ENCODE measurements at regions of chr10 and their contacts with region 1.

Region 1: GRCh38 chr10:122435212-122435827 is 19.1 kb upstream of the ARMS2 start:
- DNase-seq: no peak
- H3K4me3 ChIP-seq: no peak overlapping the region
- H3K27ac ChIP-seq: no peak overlapping the region
- H3K4me1 ChIP-seq: no peaks in the 10 kb centered on the region
- H3K27me3 ChIP-seq: no peaks in the 10 kb centered on the region
- CTCF ChIP-seq: peak; percentile 61 to 70 (median 70)
- EP300 ChIP-seq: no peak
- POLR2A ChIP-seq: no peak

Region 2: GRCh38 chr10:121956111-121957061 is 478.9 kb before region 1 on chr10:
- intact Hi-C with region 1: no loop called
- DNase-seq: no peak
- H3K4me3 ChIP-seq: no peak overlapping the region
- H3K27ac ChIP-seq: no peak overlapping the region
- H3K4me1 ChIP-seq: no peaks in the 10 kb centered on the region
- H3K27me3 ChIP-seq: no peaks in the 10 kb centered on the region
- CTCF ChIP-seq: no peak
- EP300 ChIP-seq: no peak
- POLR2A ChIP-seq: no peak

Region 3: DNA sequence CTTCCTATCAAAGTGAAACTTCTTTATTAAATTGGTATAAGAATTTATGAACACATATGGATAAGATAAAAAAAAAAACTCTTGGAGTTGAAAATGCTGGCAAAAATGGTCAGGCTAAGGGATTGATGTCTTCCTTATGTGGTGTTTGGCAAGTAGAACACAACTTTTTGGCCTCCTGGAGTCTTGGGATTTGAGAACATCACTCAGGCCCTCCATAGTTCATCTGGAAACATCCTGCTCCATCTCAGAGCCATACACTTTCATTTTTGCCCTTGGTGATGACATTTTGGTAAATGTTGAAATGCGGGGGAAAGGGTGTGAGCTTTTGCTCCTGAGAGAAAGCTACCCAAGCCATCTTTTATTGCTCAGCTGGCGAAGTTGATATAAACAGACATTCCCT is 191.8 kb before region 1 on chr10:
- intact Hi-C with region 1: no loop called
- DNase-seq: no peak
- H3K4me3 ChIP-seq: no peak overlapping the region
- H3K27ac ChIP-seq: peak overlapping the region in 2 of 4 donors; percentile 12 to 70
- H3K4me1 ChIP-seq: peaks cover 1 to 25% (median 14%) of the 10 kb centered on the region in 4 donors
- H3K27me3 ChIP-seq: no peaks in the 10 kb centered on the region
- CTCF ChIP-seq: no peak
- EP300 ChIP-seq: no peak
- POLR2A ChIP-seq: no peak

Region 4: DNA sequence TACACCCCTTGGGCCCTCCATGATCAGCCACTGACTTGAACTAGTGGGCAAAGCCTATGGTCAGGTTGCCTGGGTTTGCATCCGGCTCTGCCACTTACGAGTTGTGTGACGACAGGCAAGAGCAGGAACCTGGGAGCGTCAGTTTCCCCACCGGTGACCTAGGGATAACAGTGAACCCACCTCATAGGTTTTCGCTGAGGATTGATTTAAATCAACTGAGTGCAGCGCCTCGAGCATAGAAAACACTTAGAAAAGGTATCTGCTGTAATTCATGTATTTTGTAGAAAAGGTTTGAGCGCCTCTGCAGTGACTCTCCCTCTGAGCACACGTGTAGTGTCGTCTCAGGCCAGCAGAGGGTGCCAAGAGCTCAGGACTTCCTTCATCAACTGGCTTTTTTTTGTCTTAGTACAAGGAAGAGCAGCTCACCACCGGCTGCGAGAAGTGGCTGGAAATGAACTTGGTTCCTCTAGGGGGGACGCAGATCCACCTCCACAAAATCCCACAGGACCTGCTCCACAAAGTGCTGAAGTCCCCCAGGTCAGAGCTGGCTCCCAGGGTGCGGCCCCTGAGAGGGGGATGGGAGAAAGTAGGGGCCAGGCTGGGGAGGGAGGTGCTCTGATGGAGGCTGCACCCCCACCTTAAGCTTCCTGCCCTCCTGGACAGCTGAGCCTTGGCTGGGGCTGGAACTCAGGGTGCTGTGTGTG is 136.6 kb before region 1 on chr10:
- intact Hi-C with region 1: loop called (anchors 2 kb)
- DNase-seq: peak; percentile 90
- H3K4me3 ChIP-seq: peak overlapping the region in 3 of 4 donors; percentile 19 to 48 (median 19)
- H3K27ac ChIP-seq: peak overlapping the region in 1 of 4 donors; percentile 34
- H3K4me1 ChIP-seq: peaks cover 0 to 27% (median 26%) of the 10 kb centered on the region in 4 donors
- H3K27me3 ChIP-seq: no peaks in the 10 kb centered on the region
- CTCF ChIP-seq: peak; percentile 93 to 96 (median 96)
- EP300 ChIP-seq: no peak
- POLR2A ChIP-seq: no peak

Region 5: GRCh38 chr10:122374237-122374869 is 61.0 kb before region 1 on chr10 and contains the start of gene PLEKHA1:
- intact Hi-C with region 1: no loop called
- DNase-seq: peak; percentile 98
- H3K4me3 ChIP-seq: peak within 1 kb of the TSS; percentile 82 to 98 (median 96)
- H3K27ac ChIP-seq: peak within 1 kb of the TSS; percentile 98 to 100 (median 100)
- H3K4me1 ChIP-seq: peaks cover 30 to 70% (median 66%) of the 10 kb centered on the region in 4 donors
- H3K27me3 ChIP-seq: no peaks in the 10 kb centered on the region
- CTCF ChIP-seq: peak in 1 of 3 experiments; percentile 14
- EP300 ChIP-seq: peak; percentile 27
- POLR2A ChIP-seq: peak; percentile 77
- total RNA-seq, gene PLEKHA1: 51.4 to 101 (median 62.1) TPM

Measured in esophagus muscularis mucosa (tissue), 4 donors.